IMR-90 (cell line): ENCODE measurements at regions of chr2 and their contacts with region 1.

Region 1: GRCh38 chr2:55050133-55050994 is at the start of gene RTN4:
- DNase-seq: peak; percentile 100
- ATAC-seq: peak; percentile 82
- H3K4me3 ChIP-seq: peak within 1 kb of the TSS; percentile 70
- H3K27ac ChIP-seq: peak within 1 kb of the TSS; percentile 95
- H3K4me1 ChIP-seq: no peaks in the 10 kb centered on the region; the same call in 1 of the 2 replicates
- H3K27me3 ChIP-seq: no peaks in the 10 kb centered on the region
- CTCF ChIP-seq: peak; percentile 21; the same call in 1 of the 2 replicates
- POLR2A ChIP-seq: peak; percentile 99
- RAD21 ChIP-seq: peak; percentile 31; the same call in 1 of the 2 replicates
- total RNA-seq, gene RTN4: 77.8 and 216 TPM in 2 replicates

Region 2: DNA sequence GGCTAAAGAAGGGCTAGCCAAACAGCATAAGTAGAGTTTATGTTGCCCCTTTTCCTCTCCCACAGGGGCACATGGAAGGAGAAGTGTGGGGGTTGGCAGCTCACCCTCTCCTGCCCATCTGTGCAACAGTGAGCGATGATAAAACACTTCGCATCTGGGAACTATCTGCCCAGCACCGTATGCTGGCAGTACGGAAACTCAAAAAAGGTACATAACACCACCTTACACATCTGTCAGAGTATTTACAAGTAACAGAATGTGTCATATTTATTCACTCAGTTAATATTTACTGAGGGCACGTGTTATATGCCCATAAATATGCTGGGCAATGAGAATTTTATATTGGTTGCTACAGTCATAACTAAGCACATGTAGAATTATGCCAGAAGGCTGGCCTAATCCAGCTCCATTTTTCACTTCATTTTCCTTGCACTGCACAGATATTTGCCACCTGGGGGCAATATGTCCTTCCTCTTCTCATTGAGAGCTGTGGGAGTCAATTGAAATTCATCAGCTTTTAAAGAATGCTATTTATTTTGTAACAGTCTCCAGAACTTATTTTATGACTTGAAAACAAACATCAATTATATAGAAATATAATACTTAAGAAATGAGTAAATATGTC is 150.7 kb before region 1 on chr2:
- CTCF ChIA-PET with region 1: interaction called, 12 read pairs
- POLR2A ChIA-PET with region 1: no interaction called
- dilution Hi-C with region 1: no loop called
- in situ Hi-C with region 1: no loop called
- intact Hi-C with region 1: loop called (anchors 2 kb)
- DNase-seq: peak; percentile 70
- ATAC-seq: peak; percentile 61
- H3K4me3 ChIP-seq: no peak overlapping the region
- H3K27ac ChIP-seq: no peak overlapping the region
- H3K4me1 ChIP-seq: peaks cover 7% of the 10 kb centered on the region
- H3K27me3 ChIP-seq: no peaks in the 10 kb centered on the region; the same call in 1 of the 2 replicates
- CTCF ChIP-seq: peak; percentile 84
- POLR2A ChIP-seq: no peak
- RAD21 ChIP-seq: peak; percentile 86

Region 3: DNA sequence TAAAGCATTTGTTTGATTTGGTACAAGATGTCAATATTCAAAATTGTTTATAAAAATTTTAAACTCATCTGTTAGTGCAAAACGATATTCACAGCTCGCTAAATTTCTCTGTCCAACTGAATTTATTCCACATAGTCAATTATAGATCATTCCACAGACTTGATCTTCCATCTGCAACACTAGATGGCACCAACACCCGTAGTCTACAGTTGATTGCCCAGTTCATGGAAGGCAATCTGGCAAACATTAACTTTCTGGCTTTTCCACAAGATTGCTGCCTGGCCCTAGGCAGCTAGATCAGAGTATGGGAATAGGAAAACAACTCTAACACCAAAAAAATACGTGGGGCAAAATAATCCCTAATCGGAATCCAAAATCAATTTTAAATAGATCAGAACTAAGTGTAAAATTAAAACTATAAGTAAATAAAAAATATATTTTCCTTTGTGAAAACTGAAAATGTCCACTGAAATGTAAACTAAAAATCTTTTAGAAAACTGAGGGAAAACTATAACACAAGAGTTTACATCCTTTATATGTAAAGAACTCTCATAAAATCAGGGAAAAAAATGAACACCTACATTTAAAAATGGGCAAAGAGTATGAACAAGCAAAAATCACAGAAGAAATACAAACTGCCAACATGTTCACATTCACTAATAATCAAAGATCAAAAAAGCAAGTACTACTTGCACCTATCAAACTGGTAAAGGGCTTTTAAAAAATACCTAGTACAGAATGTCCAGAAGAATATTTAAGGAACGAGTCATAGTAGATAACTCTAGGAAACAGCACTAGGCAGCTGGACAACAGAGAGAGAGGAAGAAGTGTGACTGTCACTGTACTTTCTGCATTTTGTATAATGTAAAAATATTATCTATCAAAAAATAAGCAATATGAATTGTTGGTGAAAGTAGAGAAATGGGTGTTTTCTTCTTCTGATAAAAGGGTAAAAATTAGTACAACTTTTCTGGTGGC is 35.1 kb before region 1 on chr2:
- CTCF ChIA-PET with region 1: interaction called, 6 read pairs
- POLR2A ChIA-PET with region 1: interaction called, 3 read pairs
- dilution Hi-C with region 1: no loop called
- in situ Hi-C with region 1: no loop called
- intact Hi-C with region 1: loop called (anchors 2 kb)
- DNase-seq: peak; percentile 65
- ATAC-seq: peak; percentile 28; the same call in 1 of the 2 replicates
- H3K4me3 ChIP-seq: no peak overlapping the region
- H3K27ac ChIP-seq: no peak overlapping the region
- H3K4me1 ChIP-seq: peaks cover 25% of the 10 kb centered on the region
- H3K27me3 ChIP-seq: no peaks in the 10 kb centered on the region
- CTCF ChIP-seq: peak; percentile 57
- POLR2A ChIP-seq: no peak
- RAD21 ChIP-seq: peak; percentile 60

Region 4: GRCh38 chr2:55085113-55086040 is 35.0 kb after region 1 on chr2:
- CTCF ChIA-PET with region 1: no interaction called
- POLR2A ChIA-PET with region 1: interaction called, 12 read pairs
- dilution Hi-C with region 1: no loop called
- in situ Hi-C with region 1: no loop called
- intact Hi-C with region 1: no loop called
- DNase-seq: no peak
- ATAC-seq: 0 out of 2 replicates have a peak, but pooled peaks have one; percentile 28
- H3K4me3 ChIP-seq: no peak overlapping the region
- H3K27ac ChIP-seq: no peak overlapping the region
- H3K4me1 ChIP-seq: peaks cover 5% of the 10 kb centered on the region
- H3K27me3 ChIP-seq: no peaks in the 10 kb centered on the region
- CTCF ChIP-seq: no peak
- POLR2A ChIP-seq: no peak
- RAD21 ChIP-seq: no peak

Region 5: DNA sequence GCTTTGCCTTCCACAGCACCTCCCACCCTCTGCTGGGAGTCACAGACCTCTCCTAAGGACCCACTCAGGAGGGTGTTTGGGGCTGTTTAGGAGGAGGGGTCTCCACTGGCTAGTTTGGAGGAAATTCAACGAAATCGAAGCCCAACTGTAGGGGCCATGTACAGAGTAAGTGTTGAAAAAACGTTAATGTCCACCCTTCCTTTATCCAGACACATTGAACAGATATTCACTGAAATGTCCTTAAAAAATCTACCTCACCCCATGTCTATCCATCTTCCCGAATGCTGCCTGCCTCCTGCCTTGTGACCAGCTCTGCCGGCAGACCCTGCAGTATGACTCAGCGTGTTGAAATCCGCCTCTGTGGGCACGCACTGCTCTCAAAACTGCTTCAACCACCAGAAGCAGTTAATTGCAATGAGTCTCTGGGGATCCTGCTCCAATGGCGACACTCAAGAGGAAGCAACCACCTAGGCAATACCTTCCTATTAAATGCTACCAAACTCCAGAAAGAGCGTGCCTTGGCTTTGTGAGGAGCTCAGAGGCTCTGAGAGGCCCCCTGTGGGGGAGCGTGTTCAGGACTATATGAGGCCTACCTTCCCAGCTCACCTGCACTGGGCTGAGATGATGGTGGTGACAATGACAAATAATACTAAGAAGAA is 61.3 kb after region 1 on chr2:
- CTCF ChIA-PET with region 1: interaction called, 6 read pairs
- POLR2A ChIA-PET with region 1: interaction called, 7 read pairs
- dilution Hi-C with region 1: no loop called
- in situ Hi-C with region 1: no loop called
- intact Hi-C with region 1: loop called (anchors 1 kb)
- DNase-seq: peak; percentile 96
- ATAC-seq: peak; percentile 55
- H3K4me3 ChIP-seq: no peak overlapping the region
- H3K27ac ChIP-seq: peak overlapping the region; percentile 91
- H3K4me1 ChIP-seq: peaks cover 42% of the 10 kb centered on the region
- H3K27me3 ChIP-seq: no peaks in the 10 kb centered on the region
- CTCF ChIP-seq: no peak
- POLR2A ChIP-seq: peak; percentile 39; the same call in 1 of the 2 replicates
- RAD21 ChIP-seq: no peak

Region 6: GRCh38 chr2:55175254-55176025 is 125.1 kb after region 1 on chr2:
- CTCF ChIA-PET with region 1: interaction called, 10 read pairs
- POLR2A ChIA-PET with region 1: interaction called, 6 read pairs
- dilution Hi-C with region 1: no loop called
- in situ Hi-C with region 1: no loop called
- intact Hi-C with region 1: no loop called
- DNase-seq: peak; percentile 87
- ATAC-seq: peak; percentile 95
- H3K4me3 ChIP-seq: no peak overlapping the region
- H3K27ac ChIP-seq: no peak overlapping the region
- H3K4me1 ChIP-seq: peaks cover 2% of the 10 kb centered on the region; the same call in 1 of the 2 replicates
- H3K27me3 ChIP-seq: no peaks in the 10 kb centered on the region
- CTCF ChIP-seq: peak; percentile 89
- POLR2A ChIP-seq: no peak
- RAD21 ChIP-seq: peak; percentile 93